Vagina (tissue), 2 donors: ENCODE measurements at regions of chr3 and their contacts with region 1.

Region 1: GRCh38 chr3:124887177-124887931 is at the start of gene ITGB5:
- DNase-seq: no peak
- H3K4me3 ChIP-seq: peak within 1 kb of the TSS; percentile 84 to 89
- H3K27ac ChIP-seq: peak within 1 kb of the TSS; percentile 95
- H3K4me1 ChIP-seq: peaks cover 47% of the 10 kb centered on the region
- H3K27me3 ChIP-seq: no peaks in the 10 kb centered on the region
- CTCF ChIP-seq: no peak
- POLR2A ChIP-seq: peak in 1 of 2 donors; percentile 60
- total RNA-seq, gene ITGB5: 156 TPM

Region 2: DNA sequence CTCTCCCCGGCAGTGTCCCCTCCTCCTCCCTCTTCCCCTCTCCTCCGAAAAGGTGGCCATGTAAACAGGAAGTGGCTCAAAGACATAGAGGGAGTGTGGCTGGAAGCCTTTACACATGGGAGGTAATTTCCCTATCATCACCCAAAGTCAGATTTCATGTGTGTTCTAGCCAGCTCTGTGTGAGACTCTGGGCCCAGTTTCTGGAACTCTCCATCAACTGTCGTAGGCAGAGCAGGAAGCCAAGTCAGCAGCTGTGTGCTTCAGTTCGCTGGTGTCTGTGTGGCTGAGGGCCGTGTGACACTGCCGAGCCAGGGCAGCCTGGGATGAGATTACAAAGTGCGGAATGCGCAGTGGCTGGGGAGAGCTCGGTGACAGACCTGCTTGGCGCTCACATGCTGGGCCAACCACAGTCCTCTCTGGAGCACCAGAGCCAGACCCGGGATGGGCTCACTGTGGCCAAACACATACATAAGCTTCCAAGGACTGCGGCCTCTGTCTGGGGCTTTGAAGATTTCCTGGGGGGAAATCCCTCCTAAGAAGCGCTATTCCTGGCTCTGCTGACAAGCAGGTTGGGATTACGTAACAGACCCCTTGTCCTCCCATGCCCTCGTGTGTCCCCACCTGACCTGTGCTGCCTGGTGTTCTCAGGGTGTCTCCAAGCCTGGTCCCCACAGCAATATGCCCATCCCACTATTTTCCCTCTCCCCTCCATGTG is 106.4 kb before region 1 on chr3:
- intact Hi-C with region 1: loop called (anchors 5 kb)
- DNase-seq: no peak
- H3K4me3 ChIP-seq: no peak overlapping the region
- H3K27ac ChIP-seq: peak overlapping the region; percentile 86
- H3K4me1 ChIP-seq: peaks cover 53% of the 10 kb centered on the region
- H3K27me3 ChIP-seq: no peaks in the 10 kb centered on the region
- CTCF ChIP-seq: no peak
- POLR2A ChIP-seq: no peak

Region 3: GRCh38 chr3:124905849-124906248 is 18.5 kb after region 1 on chr3:
- intact Hi-C with region 1: no loop called
- DNase-seq: no peak
- H3K4me3 ChIP-seq: no peak overlapping the region
- H3K27ac ChIP-seq: no peak overlapping the region
- H3K4me1 ChIP-seq: peaks cover 5% of the 10 kb centered on the region
- H3K27me3 ChIP-seq: no peaks in the 10 kb centered on the region
- CTCF ChIP-seq: no peak
- POLR2A ChIP-seq: no peak

Region 4: GRCh38 chr3:125024817-125025216 is 137.5 kb after region 1 on chr3:
- intact Hi-C with region 1: no loop called
- DNase-seq: no peak
- H3K4me3 ChIP-seq: no peak overlapping the region
- H3K27ac ChIP-seq: no peak overlapping the region
- H3K4me1 ChIP-seq: peaks cover 13% of the 10 kb centered on the region
- H3K27me3 ChIP-seq: no peaks in the 10 kb centered on the region
- CTCF ChIP-seq: no peak
- POLR2A ChIP-seq: no peak